Mammary epithelial cell (primary cell): ENCODE measurements at regions of chr20 and their contacts with region 1.

Region 1: DNA sequence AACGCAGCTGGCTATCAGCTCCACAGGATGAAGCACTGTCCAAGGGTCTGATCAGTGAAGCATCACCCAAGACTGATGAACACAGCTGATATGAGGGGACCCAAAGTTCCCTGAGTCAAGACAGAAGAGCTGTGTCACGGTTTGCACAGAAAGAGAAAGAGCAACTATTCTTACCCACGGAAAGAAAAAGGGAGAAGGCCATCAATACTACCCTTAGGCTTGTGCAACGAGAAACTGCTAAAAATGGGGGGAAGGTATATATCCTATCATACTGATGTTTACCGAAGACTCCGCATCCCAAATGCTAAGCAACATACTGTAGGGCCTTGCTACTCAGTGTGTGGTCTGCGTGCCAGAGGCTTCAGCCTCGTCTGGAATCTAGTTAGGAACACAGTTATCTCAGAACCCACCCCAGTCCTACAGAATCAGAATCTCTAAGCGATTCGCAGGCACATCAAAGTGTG is 665 bp downstream of the FASTKD5 start:
- DNase-seq: no peak
- H3K4me3 ChIP-seq: peak overlapping the region; percentile 84 to 94 (median 90)
- H3K27ac ChIP-seq: peak overlapping the region; percentile 79
- H3K4me1 ChIP-seq: peaks cover 11% of the 10 kb centered on the region
- H3K27me3 ChIP-seq: no peaks in the 10 kb centered on the region
- CTCF ChIP-seq: no peak

Region 2: GRCh38 chr20:3173610-3174441 is 14.8 kb after region 1 on chr20:
- CTCF ChIA-PET with region 1: no interaction called
- dilution Hi-C with region 1: no loop called
- in situ Hi-C with region 1: no loop called
- intact Hi-C with region 1: loop called (anchors 1 kb)
- DNase-seq: peak; percentile 69
- H3K4me3 ChIP-seq: peak overlapping the region; percentile 66 to 96 (median 94)
- H3K27ac ChIP-seq: peak overlapping the region; percentile 31
- H3K4me1 ChIP-seq: peaks cover 18% of the 10 kb centered on the region
- H3K27me3 ChIP-seq: no peaks in the 10 kb centered on the region
- CTCF ChIP-seq: peak in 1 of 2 donors; percentile 36

Region 3: GRCh38 chr20:3204124-3204822 is 45.3 kb after region 1 on chr20 and contains the start of gene DDRGK1:
- CTCF ChIA-PET with region 1: no interaction called
- dilution Hi-C with region 1: no loop called
- in situ Hi-C with region 1: no loop called
- intact Hi-C with region 1: loop called (anchors 1 kb)
- DNase-seq: peak; percentile 80
- H3K4me3 ChIP-seq: peak within 1 kb of the TSS; percentile 73 to 81 (median 81)
- H3K27ac ChIP-seq: peak within 1 kb of the TSS; percentile 49
- H3K4me1 ChIP-seq: peaks cover 20% of the 10 kb centered on the region
- H3K27me3 ChIP-seq: no peaks in the 10 kb centered on the region
- CTCF ChIP-seq: no peak
- total RNA-seq, gene DDRGK1: 25.2 to 59.1 TPM

Region 4: GRCh38 chr20:3209257-3209945 is 50.4 kb after region 1 on chr20 and contains the start of gene ITPA:
- CTCF ChIA-PET with region 1: no interaction called
- dilution Hi-C with region 1: loop called (anchors 5 kb)
- in situ Hi-C with region 1: no loop called
- intact Hi-C with region 1: no loop called
- DNase-seq: peak; percentile 45
- H3K4me3 ChIP-seq: peak within 1 kb of the TSS; percentile 63 to 94 (median 90)
- H3K27ac ChIP-seq: peak within 1 kb of the TSS; percentile 62
- H3K4me1 ChIP-seq: peaks cover 11% of the 10 kb centered on the region
- H3K27me3 ChIP-seq: no peaks in the 10 kb centered on the region
- CTCF ChIP-seq: no peak
- total RNA-seq, gene ITPA: 29.2 to 68.7 TPM